PC-9 (cell line): ENCODE measurements at regions of chr12 and their contacts with region 1.

Region 1: GRCh38 chr12:122834104-122834920 is 945 bp upstream of the HIP1R start:
- DNase-seq: peak; percentile 67 to 74
- H3K4me3 ChIP-seq: peak overlapping the region; percentile 55; the same call in 1 of the 2 replicates
- H3K27ac ChIP-seq: peak overlapping the region; percentile 70
- H3K4me1 ChIP-seq: peaks cover 39% of the 10 kb centered on the region
- H3K27me3 ChIP-seq: no peaks in the 10 kb centered on the region
- CTCF ChIP-seq: no peak; the same call in 1 of the 2 replicates

Region 2: DNA sequence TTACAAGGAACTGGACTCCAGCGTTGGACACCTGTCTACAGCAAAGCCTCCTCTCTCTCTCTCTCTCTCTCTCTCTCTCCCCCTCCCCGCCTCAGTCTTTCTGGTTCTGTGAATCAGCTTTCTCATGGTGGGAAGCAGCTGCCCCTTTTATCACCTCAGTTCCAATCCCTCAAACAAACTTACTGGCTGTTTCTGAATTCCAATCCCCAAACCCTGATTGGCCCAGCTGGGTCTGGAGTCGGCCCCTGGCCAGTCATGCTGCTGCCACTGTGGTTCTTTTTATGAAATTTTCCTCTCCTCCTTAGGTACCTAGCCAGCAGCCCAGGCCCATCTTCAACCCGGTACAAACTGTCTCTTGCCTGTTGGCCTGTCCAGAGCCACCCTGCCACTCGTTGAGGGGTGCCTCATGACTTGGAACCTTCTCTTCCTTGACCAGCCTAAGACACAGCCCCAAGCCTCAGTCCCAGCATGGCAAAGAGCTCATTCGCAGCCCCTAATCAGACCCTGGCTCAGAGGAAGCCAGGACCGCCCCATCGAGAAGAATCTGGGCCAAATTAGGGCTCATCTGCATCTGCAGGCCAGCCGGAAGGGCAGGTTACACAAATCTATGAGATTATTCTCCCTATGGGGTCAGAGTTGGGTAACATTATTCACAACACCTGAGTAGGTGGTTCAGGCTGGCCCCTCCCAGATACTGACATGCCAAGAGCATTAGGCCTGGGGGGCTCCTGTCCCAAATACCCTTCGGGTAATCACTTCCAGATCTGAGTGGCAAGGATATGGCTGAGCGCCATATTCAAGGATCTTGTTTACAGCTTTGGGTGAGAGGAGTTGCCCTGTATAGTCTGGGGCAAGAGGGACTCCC is 1155.4 kb before region 1 on chr12:
- CTCF ChIA-PET with region 1: no interaction called
- POLR2A ChIA-PET with region 1: no interaction called
- intact Hi-C with region 1: no loop called
- DNase-seq: no peak
- H3K4me3 ChIP-seq: no peak overlapping the region
- H3K27ac ChIP-seq: no peak overlapping the region
- H3K4me1 ChIP-seq: no peaks in the 10 kb centered on the region
- H3K27me3 ChIP-seq: no peaks in the 10 kb centered on the region
- CTCF ChIP-seq: no peak

Region 3: DNA sequence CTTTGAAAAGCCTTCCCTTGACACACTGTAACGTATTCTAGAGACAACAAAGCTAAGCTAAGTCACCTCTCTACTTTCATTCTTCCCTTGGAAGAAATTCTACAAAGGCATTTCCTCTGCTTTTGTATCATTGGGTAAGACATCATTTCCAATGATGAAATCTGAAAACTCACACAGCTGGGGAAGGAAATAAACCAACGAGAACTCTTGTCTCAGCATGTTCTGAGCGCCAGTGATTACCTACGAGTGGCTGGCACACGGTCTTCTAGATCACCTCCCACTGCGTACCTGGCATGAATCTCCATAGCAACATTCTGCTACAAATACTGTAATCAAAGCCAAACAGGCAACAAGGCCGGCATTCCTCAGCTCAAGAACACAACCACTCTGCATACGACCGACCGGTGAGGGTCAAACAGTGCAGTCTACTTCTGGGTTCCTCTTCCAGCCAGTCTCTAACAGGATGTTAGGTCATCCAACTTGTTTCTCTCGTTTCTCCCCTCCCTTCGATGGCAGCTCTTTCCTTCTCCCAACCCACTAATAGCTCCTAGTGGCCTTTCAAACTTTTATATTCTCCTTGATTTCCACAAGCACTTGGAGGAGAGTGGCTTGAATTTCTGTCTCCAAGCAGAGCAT is 54.0 kb after region 1 on chr12:
- CTCF ChIA-PET with region 1: no interaction called
- POLR2A ChIA-PET with region 1: no interaction called
- intact Hi-C with region 1: loop called (anchors 1 kb)
- DNase-seq: peak; percentile 86 to 98
- H3K4me3 ChIP-seq: peak overlapping the region; percentile 48; the same call in 1 of the 2 replicates
- H3K27ac ChIP-seq: peak overlapping the region; percentile 97
- H3K4me1 ChIP-seq: peaks cover 86% of the 10 kb centered on the region
- H3K27me3 ChIP-seq: no peaks in the 10 kb centered on the region
- CTCF ChIP-seq: no peak

Region 4: GRCh38 chr12:123024819-123025391 is 190.6 kb after region 1 on chr12:
- CTCF ChIA-PET with region 1: interaction called, 13 read pairs
- POLR2A ChIA-PET with region 1: no interaction called
- intact Hi-C with region 1: no loop called
- DNase-seq: no peak
- H3K4me3 ChIP-seq: no peak overlapping the region
- H3K27ac ChIP-seq: no peak overlapping the region
- H3K4me1 ChIP-seq: peaks cover under 1% of the 10 kb centered on the region; the same call in 1 of the 2 replicates
- H3K27me3 ChIP-seq: no peaks in the 10 kb centered on the region
- CTCF ChIP-seq: no peak